CD8-positive, alpha-beta memory T cell (primary cell): ENCODE measurements at regions of chr10 and their contacts with region 1.

Region 1: GRCh38 chr10:6401562-6402348 is 178.3 kb downstream of the PRKCQ start:
- DNase-seq: peak; percentile 25 to 69 (median 59)
- H3K4me3 ChIP-seq: no peak overlapping the region
- H3K4me3 Mint-ChIP-seq: peak overlapping the region in 1 of 7 donors; percentile 36
- H3K27ac ChIP-seq: no peak overlapping the region
- H3K27ac Mint-ChIP-seq: peak overlapping the region in 5 of 8 donors; percentile 15 to 89 (median 80)
- H3K4me1 ChIP-seq: peaks cover 12% of the 10 kb centered on the region
- H3K4me1 Mint-ChIP-seq: peaks cover 7 to 16% (median 13%) of the 10 kb centered on the region in 3 donors
- H3K27me3 ChIP-seq: no peaks in the 10 kb centered on the region
- H3K27me3 Mint-ChIP-seq: peaks cover 0 to 1% of the 10 kb centered on the region in 2 donors

Region 2: GRCh38 chr10:6014241-6014761 is 387.5 kb before region 1 on chr10:
- CTCF ChIA-PET with region 1: interaction called, 11 read pairs
- POLR2A ChIA-PET with region 1: no interaction called
- DNase-seq: peak; percentile 29 to 79 (median 77)
- H3K4me3 ChIP-seq: no peak overlapping the region
- H3K4me3 Mint-ChIP-seq: peak overlapping the region in 5 of 7 donors; percentile 22 to 73 (median 56)
- H3K27ac ChIP-seq: no peak overlapping the region
- H3K27ac Mint-ChIP-seq: peak overlapping the region; percentile 85 to 98 (median 96)
- H3K4me1 ChIP-seq: peaks cover 12% of the 10 kb centered on the region
- H3K4me1 Mint-ChIP-seq: peaks cover 14 to 19% (median 16%) of the 10 kb centered on the region in 3 donors
- H3K27me3 ChIP-seq: no peaks in the 10 kb centered on the region
- H3K27me3 Mint-ChIP-seq: peaks cover under 1 to 3% of the 10 kb centered on the region in 2 donors

Region 3: DNA sequence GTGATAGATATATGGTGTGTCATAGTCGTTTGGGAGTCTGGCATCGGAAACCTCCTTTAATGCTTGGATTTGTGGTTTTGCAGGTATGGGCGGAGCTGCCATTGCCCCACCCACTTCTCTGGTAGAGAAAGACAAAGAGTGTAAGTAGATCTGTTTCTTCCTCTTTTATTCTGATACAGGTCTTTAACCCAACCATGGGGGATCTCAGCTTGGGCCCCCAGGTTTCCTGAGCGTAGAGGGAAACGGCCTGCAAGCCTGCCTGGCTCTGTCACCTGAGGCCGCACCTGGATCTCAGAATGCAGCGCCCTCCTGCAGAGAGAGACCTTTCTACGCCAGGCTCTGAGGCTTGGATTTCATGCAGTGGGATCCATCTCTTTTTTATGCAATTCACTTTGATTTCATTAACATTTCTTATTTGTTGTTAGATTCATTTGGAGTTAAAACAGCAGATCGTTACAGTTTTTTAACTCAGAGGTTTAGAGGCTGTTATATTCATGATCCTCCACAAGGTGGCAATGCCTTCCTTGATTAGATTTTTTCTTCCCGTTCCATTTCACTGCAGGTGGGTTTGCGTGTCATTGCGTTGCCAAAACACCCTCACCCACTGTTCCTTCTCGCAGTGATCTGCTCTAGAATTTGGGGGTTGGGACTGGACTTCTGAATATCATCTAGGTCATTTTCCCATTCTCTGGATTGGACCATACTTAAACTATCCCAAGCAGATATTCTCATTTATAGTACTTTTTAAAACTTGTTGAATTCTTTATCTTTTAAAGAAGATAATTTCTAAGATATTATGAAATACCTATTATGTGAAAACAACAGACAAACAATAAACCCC is 292.9 kb before region 1 on chr10:
- CTCF ChIA-PET with region 1: interaction called, 25 read pairs
- POLR2A ChIA-PET with region 1: no interaction called
- DNase-seq: peak in 3 of 5 donors; percentile 22 to 54 (median 45)
- H3K4me3 ChIP-seq: no peak overlapping the region
- H3K4me3 Mint-ChIP-seq: peak overlapping the region in 5 of 7 donors; percentile 57 to 73 (median 62)
- H3K27ac ChIP-seq: no peak overlapping the region
- H3K27ac Mint-ChIP-seq: peak overlapping the region; percentile 68 to 94 (median 86)
- H3K4me1 ChIP-seq: peaks cover 10% of the 10 kb centered on the region
- H3K4me1 Mint-ChIP-seq: peaks cover 26 to 43% (median 34%) of the 10 kb centered on the region in 3 donors
- H3K27me3 ChIP-seq: no peaks in the 10 kb centered on the region
- H3K27me3 Mint-ChIP-seq: peaks cover 0 to 1% of the 10 kb centered on the region in 2 donors

Region 4: GRCh38 chr10:6151087-6151977 is 250.4 kb before region 1 on chr10:
- CTCF ChIA-PET with region 1: interaction called, 17 read pairs
- POLR2A ChIA-PET with region 1: no interaction called
- DNase-seq: peak in 4 of 5 donors; percentile 26 to 59 (median 50)
- H3K4me3 ChIP-seq: peak overlapping the region; percentile 34
- H3K4me3 Mint-ChIP-seq: peak overlapping the region in 6 of 7 donors; percentile 43 to 75 (median 48)
- H3K27ac ChIP-seq: no peak overlapping the region
- H3K27ac Mint-ChIP-seq: peak overlapping the region in 7 of 8 donors; percentile 13 to 89 (median 73)
- H3K4me1 ChIP-seq: peaks cover 25% of the 10 kb centered on the region
- H3K4me1 Mint-ChIP-seq: peaks cover 43 to 60% (median 44%) of the 10 kb centered on the region in 3 donors
- H3K27me3 ChIP-seq: no peaks in the 10 kb centered on the region
- H3K27me3 Mint-ChIP-seq: no peaks in the 10 kb centered on the region

Region 5: DNA sequence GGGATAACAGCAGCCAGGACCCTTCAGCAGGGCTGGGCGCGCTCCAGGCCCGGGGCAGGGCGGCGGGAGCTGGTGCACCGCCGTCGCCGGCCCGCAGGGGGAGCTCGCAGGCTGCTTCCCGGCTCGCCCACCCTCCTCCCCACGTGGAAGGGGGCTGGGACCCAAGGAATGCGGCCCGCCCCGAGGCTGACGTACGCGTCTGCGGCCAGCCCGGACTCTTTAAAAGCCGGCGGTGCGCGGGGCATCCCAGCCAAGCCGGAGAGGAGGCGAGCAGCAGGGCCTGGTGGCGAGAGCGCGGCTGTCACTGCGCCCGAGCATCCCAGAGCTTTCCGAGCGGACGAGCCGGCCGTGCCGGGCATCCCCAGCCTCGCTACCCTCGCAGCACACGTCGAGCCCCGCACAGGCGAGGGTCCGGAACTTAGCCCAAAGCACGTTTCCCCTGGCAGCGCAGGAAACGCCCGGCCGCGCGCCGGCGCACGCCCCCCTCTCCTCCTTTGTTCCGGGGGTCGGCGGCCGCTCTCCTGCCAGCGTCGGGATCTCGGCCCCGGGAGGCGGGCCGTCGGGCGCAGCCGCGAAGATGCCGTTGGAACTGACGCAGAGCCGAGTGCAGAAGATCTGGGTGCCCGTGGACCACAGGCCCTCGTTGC is 198.9 kb before region 1 on chr10 and contains the start of gene PFKFB3:
- CTCF ChIA-PET with region 1: interaction called, 137 read pairs
- POLR2A ChIA-PET with region 1: interaction called, 23 read pairs
- DNase-seq: peak; percentile 85 to 94 (median 87)
- H3K4me3 ChIP-seq: peak within 1 kb of the TSS; percentile 83
- H3K4me3 Mint-ChIP-seq: peak within 1 kb of the TSS; percentile 91 to 99 (median 95)
- H3K27ac ChIP-seq: peak within 1 kb of the TSS; percentile 64
- H3K27ac Mint-ChIP-seq: peak within 1 kb of the TSS; percentile 73 to 96 (median 92)
- H3K4me1 ChIP-seq: peaks cover 19% of the 10 kb centered on the region
- H3K4me1 Mint-ChIP-seq: peaks cover 20 to 41% (median 34%) of the 10 kb centered on the region in 3 donors
- H3K27me3 ChIP-seq: no peaks in the 10 kb centered on the region
- H3K27me3 Mint-ChIP-seq: peaks cover 0 to 2% of the 10 kb centered on the region in 2 donors
- total RNA-seq, gene PFKFB3: 53.6 to 60.1 TPM

Region 6: DNA sequence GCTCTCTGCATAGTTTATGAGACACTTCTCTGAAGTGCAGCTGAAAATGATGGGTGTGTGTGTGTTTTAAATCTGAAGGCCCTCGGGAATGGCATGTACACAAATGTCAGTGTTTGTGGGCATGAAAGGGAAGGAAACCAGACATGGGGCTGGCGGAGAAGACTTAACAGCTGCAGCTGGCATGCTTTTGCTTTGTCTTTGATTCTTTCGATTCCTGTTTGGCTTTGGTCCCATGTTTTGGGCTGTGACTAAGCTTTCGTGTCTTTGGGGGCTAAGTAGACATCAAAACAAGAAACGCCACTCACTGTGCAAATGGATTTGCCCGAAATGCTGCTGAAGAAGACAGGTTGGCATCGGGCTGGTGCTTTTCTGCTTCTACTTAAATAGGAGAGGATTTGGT is 19.7 kb before region 1 on chr10:
- CTCF ChIA-PET with region 1: interaction called, 10 read pairs
- POLR2A ChIA-PET with region 1: no interaction called
- DNase-seq: peak in 2 of 5 donors; percentile 10 to 57
- H3K4me3 ChIP-seq: no peak overlapping the region
- H3K4me3 Mint-ChIP-seq: peak overlapping the region in 4 of 7 donors; percentile 34 to 79 (median 47)
- H3K27ac ChIP-seq: no peak overlapping the region
- H3K27ac Mint-ChIP-seq: peak overlapping the region in 4 of 8 donors; percentile 2 to 81 (median 58)
- H3K4me1 ChIP-seq: peaks cover 13% of the 10 kb centered on the region
- H3K4me1 Mint-ChIP-seq: peaks cover 10 to 16% (median 10%) of the 10 kb centered on the region in 3 donors
- H3K27me3 ChIP-seq: no peaks in the 10 kb centered on the region
- H3K27me3 Mint-ChIP-seq: peaks cover 0 to 4% of the 10 kb centered on the region in 2 donors